ENCODE measurements at regions of chr10 and their contacts with region 1.

Region 1: DNA sequence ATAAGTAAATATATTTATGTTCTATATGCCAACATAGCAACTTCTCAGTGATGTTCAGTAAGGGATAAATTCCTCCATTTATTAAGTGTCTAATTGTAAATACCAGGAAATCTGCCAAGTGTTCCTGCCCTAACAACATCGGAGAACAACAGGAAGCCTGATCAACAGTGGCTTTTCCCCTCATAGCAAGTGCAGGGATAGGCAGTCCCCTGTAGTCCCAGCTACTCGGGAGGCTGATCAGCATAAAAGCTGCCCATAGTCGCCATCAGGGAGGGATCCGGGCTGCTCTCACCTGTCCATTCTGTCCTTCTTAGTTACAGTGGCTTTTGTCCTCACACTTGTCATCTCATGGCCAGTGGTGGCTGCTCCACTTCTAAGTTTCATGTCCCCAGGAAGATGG is 141.3 kb downstream of the IDE start:
- DNase-seq: no peak
- H3K4me3 Mint-ChIP-seq: no peak overlapping the region
- H3K27ac Mint-ChIP-seq: no peak overlapping the region
- H3K4me1 Mint-ChIP-seq: no peaks in the 10 kb centered on the region
- H3K27me3 Mint-ChIP-seq: no peaks in the 10 kb centered on the region

Region 2: GRCh38 chr10:92074126-92074887 is 358.3 kb before region 1 on chr10:
- CTCF ChIA-PET with region 1: interaction called, 5 read pairs
- POLR2A ChIA-PET with region 1: no interaction called
- intact Hi-C with region 1: loop called (anchors 5 kb)
- DNase-seq: no peak
- H3K4me3 Mint-ChIP-seq: no peak overlapping the region
- H3K27ac Mint-ChIP-seq: no peak overlapping the region
- H3K4me1 Mint-ChIP-seq: peaks cover 2% of the 10 kb centered on the region
- H3K27me3 Mint-ChIP-seq: no peaks in the 10 kb centered on the region

Region 3: DNA sequence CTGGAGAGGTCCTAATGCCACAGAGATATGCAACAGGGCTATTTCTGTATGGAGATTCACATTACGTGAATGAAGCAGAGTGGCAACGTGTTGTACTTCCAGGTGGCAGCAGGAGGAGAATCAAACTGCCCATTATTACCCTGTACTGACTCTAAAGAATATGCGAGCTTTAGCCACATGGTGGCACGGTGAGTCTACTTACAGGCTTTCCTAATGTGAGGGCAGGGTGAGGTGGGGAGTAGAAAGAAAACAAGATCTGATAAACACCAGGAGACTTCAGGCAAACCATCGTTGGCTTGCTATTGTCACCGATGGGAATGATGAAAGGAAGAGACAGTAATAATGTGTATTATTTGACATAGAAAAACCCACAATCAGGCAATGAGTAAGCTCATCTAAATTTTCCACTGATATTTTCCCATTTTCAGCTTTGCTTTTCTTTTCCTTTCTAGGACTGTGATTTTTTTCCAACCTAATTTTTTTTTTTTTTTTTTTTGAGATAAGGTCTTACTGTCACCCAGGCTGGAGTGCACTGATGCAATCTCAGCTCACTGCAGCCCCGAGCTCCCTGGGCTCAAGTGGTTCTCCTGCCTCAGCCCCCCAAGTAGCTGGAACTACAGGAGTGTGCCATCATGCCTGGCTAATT is 344.7 kb before region 1 on chr10:
- CTCF ChIA-PET with region 1: interaction called, 6 read pairs
- POLR2A ChIA-PET with region 1: no interaction called
- intact Hi-C with region 1: loop called (anchors 1 kb)
- DNase-seq: peak; percentile 72
- H3K4me3 Mint-ChIP-seq: no peak overlapping the region
- H3K27ac Mint-ChIP-seq: no peak overlapping the region
- H3K4me1 Mint-ChIP-seq: peaks cover 10% of the 10 kb centered on the region
- H3K27me3 Mint-ChIP-seq: no peaks in the 10 kb centered on the region